RWPE1 (cell line): ENCODE measurements at regions of chr17 and their contacts with region 1.

Region 1: GRCh38 chr17:68172461-68172954 is 75.3 kb upstream of the AMZ2 start:
- DNase-seq: peak; percentile 19
- H3K27ac ChIP-seq: no peak overlapping the region
- CTCF ChIP-seq: peak; percentile 100

Region 2: DNA sequence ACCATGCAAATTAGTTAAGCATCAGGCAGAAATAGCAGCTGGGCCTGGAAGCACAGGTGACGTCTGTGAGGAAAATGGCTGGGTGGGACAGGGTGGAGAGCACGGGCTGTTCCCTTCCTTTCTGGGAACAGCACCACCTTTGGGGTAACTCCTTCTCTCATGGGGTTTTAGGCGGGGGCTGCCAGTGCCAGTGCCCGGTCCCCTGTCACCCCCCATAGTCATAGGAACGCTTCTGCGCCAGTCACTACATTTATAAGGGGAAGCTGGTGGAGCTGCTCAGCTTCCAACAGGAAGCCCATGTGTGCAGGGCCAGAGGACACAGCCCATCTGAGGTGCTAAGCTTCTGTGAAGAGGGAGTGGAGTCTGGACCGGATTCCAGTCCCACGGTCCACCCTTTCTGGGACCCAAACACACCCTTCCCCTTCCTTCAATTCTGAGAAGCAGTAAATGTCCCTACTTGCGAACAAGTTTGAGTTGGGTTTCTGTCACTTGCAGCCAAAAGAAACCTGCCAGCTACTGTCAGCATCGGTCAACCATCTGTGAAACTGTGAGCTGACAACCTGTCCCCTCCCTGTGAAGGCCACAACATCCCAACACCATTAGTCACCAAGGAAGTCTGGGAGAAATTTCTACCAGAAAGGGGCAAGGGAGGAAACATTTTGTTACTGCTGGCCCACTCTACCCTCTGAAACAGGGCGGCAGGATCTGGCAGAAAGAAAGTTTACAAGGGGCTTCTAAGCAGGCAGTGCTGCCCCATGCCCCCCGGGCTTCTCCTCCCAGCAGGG is 10.7 kb before region 1 on chr17:
- CTCF ChIA-PET with region 1: no interaction called
- POLR2A ChIA-PET with region 1: no interaction called
- DNase-seq: no peak
- H3K27ac ChIP-seq: no peak overlapping the region
- CTCF ChIP-seq: no peak

Region 3: DNA sequence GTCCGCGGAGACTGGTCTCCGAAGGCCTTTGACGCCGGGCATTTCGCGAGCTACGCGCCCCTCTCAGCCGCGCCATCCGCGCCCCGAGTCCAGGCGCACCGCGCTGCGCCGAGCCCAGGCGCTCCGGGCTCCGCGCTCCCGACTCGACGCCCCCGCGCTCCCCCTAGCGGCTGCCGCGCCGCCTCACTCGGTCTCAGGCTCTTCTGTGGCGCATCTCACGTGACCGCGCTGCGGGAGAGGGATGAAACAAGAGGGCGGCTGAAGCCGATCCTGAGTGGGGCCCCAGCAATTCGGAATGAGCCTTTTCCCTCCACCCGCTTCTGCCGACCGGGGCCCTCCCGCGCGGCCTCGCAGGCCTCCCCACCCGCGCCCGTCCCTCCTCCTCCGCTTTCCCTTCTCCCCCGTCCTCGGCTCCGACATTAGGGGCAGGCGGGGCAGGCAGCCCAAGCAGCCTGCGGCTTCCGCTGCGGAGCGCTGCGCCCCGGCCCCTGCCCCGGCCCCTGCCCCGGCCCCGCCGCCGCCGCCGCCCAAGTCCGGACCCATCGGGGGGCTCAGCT is 32.8 kb after region 1 on chr17:
- CTCF ChIA-PET with region 1: interaction called, 24 read pairs
- POLR2A ChIA-PET with region 1: no interaction called
- DNase-seq: peak; percentile 68
- H3K27ac ChIP-seq: peak overlapping the region; percentile 70
- CTCF ChIP-seq: peak; percentile 95